Activated T-helper 1 cell treated with anti-CD3 and anti-CD28 coated beads, Interleukin-12 subunit alpha, Interleukin-12 subunit beta, Interleukin-2, Interleukin-4 antibody, amounts not matched to agents 30 ng/mL and 10 ng/mL and 1 ng/mL, durations not matched to agents 14 hours and 24 hours and 36 hours (primary cell): ENCODE measurements at regions of chr7 and their contacts with region 1.

Region 1: DNA sequence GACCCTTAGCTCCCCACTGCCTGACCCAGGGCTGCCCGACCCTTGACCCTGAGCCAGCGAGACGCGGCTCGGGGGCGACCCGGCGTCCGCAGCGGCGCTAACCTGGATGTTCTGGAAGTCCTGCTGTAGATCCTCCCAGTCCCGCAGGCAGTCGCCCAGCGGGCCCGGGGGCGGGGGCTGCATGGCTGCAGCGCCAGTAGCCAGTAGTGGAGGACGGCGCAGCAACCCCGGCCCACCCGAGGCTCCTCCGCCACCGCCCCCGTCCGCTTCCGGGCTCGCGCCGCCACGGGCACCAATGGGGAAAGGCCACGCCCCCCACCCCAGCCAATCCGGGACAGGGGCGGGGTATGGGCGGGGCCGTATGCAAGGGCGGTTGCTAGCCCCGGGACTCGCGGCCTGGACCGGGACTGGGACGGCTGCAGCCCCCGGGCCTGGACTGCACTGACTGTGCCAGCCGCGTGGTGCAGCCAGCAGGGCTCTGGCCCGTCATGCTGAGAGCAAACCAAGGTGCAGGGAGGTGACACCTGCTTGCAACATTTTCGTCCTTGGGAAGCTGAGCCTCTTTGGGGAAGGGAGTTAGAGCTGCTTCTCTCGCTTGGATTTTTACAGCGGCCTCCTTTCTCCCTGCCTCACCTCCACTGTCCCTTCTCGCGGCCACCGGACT is at the start of gene TMEM120A:
- DNase-seq: peak; percentile 93
- H3K4me3 Mint-ChIP-seq: peak within 1 kb of the TSS; percentile 84
- H3K27ac Mint-ChIP-seq: peak within 1 kb of the TSS; percentile 18
- H3K4me1 Mint-ChIP-seq: peaks cover 25% of the 10 kb centered on the region
- H3K27me3 Mint-ChIP-seq: no peaks in the 10 kb centered on the region
- total RNA-seq, gene TMEM120A: 44.3 and 49.9 TPM in 2 replicates

Region 2: GRCh38 chr7:75914730-75915585 is 79.6 kb before region 1 on chr7 and contains the start of gene POR:
- intact Hi-C with region 1: loop called (anchors 1 kb)
- DNase-seq: peak; percentile 97
- H3K4me3 Mint-ChIP-seq: peak within 1 kb of the TSS; percentile 91
- H3K27ac Mint-ChIP-seq: peak within 1 kb of the TSS; percentile 86
- H3K4me1 Mint-ChIP-seq: peaks cover 35% of the 10 kb centered on the region
- H3K27me3 Mint-ChIP-seq: peaks cover 3% of the 10 kb centered on the region
- total RNA-seq, gene POR: 84.4 and 91.2 TPM in 2 replicates